ENCODE measurements at regions of chr6 and their contacts with region 1.

Region 1: GRCh38 chr6:40900791-40901190 is 138.2 kb downstream of the UNC5CL start:
- DNase-seq: no peak
- H3K4me3 ChIP-seq: no peak overlapping the region
- H3K4me3 Mint-ChIP-seq: no peak overlapping the region
- H3K27ac Mint-ChIP-seq: no peak overlapping the region
- H3K4me1 ChIP-seq: peaks cover 33% of the 10 kb centered on the region
- H3K4me1 Mint-ChIP-seq: peaks cover 27% of the 10 kb centered on the region
- H3K27me3 ChIP-seq: no peaks in the 10 kb centered on the region
- H3K27me3 Mint-ChIP-seq: no peaks in the 10 kb centered on the region
- CTCF ChIP-seq: no peak

Region 2: DNA sequence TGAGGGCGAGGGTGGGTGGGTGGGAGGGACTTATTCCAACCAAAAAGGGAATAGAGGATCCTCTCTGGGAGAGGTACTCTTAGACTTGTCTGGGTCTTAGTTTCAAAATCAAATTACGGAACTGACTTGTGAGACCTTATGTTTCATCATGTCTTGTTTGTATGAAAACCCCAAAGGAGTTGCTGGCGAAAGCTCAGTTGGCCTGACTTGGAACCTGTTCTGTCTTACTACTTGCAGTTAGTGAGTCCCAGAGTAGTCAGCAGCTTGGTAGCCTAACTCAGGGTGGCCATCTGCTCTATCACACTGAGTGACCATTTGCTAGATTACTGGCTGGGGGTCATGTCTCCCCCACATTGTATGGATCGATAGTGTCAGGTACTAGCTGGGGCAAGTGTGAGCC is 851.7 kb before region 1 on chr6:
- CTCF ChIA-PET with region 1: no interaction called
- POLR2A ChIA-PET with region 1: no interaction called
- intact Hi-C with region 1: no loop called
- DNase-seq: no peak
- H3K4me3 ChIP-seq: no peak overlapping the region
- H3K4me3 Mint-ChIP-seq: no peak overlapping the region
- H3K27ac Mint-ChIP-seq: no peak overlapping the region
- H3K4me1 ChIP-seq: no peaks in the 10 kb centered on the region
- H3K4me1 Mint-ChIP-seq: no peaks in the 10 kb centered on the region
- H3K27me3 ChIP-seq: no peaks in the 10 kb centered on the region
- H3K27me3 Mint-ChIP-seq: peaks cover 4% of the 10 kb centered on the region
- CTCF ChIP-seq: no peak

Region 3: GRCh38 chr6:40950986-40951698 is 50.4 kb after region 1 on chr6:
- CTCF ChIA-PET with region 1: no interaction called
- POLR2A ChIA-PET with region 1: no interaction called
- intact Hi-C with region 1: loop called (anchors 2 kb)
- DNase-seq: no peak
- H3K4me3 ChIP-seq: no peak overlapping the region
- H3K4me3 Mint-ChIP-seq: no peak overlapping the region
- H3K27ac Mint-ChIP-seq: peak overlapping the region; percentile 73
- H3K4me1 ChIP-seq: peaks cover 9% of the 10 kb centered on the region
- H3K4me1 Mint-ChIP-seq: peaks cover 20% of the 10 kb centered on the region
- H3K27me3 ChIP-seq: no peaks in the 10 kb centered on the region
- H3K27me3 Mint-ChIP-seq: no peaks in the 10 kb centered on the region
- CTCF ChIP-seq: no peak

Measured in Caco-2 (cell line).